Activated T-helper 2 cell treated with anti-CD3 and anti-CD28 coated beads, Interferon-gamma antibody, Interleukin-2, Interleukin-4, amounts not matched to agents 10 μg/mL and 5 μg/mL and 100 μg/mL, durations not matched to agents 14 hours and 24 hours and 36 hours (primary cell): ENCODE measurements at regions of chr1 and their contacts with region 1.

Region 1: GRCh38 chr1:59025898-59026426 is 242.1 kb upstream of the JUN start:
- DNase-seq: no peak
- H3K4me3 Mint-ChIP-seq: peak overlapping the region; percentile 69
- H3K27ac Mint-ChIP-seq: no peak overlapping the region
- H3K4me1 Mint-ChIP-seq: peaks cover 16% of the 10 kb centered on the region
- H3K27me3 Mint-ChIP-seq: no peaks in the 10 kb centered on the region

Region 2: DNA sequence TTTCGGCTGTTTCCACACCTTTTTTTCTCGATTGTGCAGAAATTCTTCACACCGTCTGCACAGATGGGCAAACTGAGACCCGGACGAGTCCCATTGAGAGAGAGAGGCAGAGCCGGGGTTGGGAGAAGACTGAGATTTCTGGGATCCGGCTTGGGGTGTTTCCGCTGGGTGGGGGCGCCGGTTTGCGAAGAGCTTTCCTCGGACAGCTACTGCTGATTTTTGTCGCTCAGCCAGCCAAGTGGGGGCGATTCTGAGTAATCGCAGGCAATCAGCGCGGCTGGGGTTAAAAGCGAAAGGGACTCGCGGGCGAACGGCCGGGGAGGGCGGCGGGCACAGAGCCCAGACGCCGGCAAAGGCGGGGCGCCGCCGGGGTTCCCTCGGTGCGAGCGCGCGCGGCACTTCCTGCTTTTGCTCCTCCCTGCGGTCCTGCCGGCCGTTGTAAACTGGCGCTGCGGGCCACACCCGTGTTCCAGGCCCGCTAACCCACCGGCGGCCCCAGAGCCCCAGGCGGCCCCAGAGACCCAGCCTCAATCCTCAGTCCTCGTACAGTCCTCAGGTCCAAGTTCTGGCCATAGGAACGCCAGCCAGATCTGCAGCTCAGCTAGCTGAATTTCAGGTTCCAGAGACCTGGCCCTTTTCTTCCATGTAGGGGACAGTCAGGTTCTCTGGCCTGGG is 209.8 kb before region 1 on chr1:
- intact Hi-C with region 1: loop called (anchors 2 kb)
- DNase-seq: peak; percentile 85
- H3K4me3 Mint-ChIP-seq: peak overlapping the region; percentile 76
- H3K27ac Mint-ChIP-seq: peak overlapping the region; percentile 73
- H3K4me1 Mint-ChIP-seq: peaks cover 43% of the 10 kb centered on the region
- H3K27me3 Mint-ChIP-seq: peaks cover 7% of the 10 kb centered on the region

Region 3: DNA sequence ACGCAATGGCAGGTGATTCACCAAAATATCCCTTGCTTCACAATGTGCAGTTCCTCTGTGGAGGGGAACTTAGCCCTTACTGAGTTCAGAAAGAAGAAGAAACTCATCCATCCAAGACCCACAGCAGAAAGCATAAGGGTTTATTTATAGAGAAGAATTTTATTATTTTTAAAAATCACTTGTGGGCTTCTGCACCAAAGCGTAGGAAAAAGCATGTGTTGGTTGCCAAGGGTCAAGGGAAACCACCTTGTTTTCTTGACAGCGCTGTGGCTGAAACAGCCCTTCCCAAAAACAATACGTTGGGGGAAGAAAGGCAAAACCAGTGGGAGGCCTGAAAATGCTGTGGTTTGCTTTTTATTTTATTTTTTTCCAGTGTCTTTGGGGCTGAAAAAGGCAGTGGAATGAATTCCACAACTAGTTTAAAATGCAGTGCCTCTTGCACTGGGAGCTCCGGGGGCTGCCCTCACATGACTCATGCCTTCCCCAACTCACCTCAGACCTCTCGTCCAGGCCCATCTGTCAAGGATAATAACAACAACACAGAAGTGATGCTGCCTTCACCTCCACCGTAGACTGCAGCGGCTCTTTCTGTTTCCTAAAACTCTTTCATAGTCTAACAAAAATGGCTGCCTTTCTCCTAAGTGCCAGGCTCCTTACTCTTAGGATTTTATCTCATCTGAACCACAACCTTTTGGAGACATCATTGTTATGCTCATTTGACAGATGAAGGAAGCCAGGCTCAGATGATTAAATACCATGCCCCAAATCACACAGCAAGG is 18.0 kb before region 1 on chr1:
- intact Hi-C with region 1: loop called (anchors 1 kb)
- DNase-seq: no peak
- H3K4me3 Mint-ChIP-seq: no peak overlapping the region
- H3K27ac Mint-ChIP-seq: peak overlapping the region; percentile 85
- H3K4me1 Mint-ChIP-seq: peaks cover 55% of the 10 kb centered on the region
- H3K27me3 Mint-ChIP-seq: no peaks in the 10 kb centered on the region

Region 4: GRCh38 chr1:59143133-59143487 is 117.1 kb after region 1 on chr1:
- intact Hi-C with region 1: loop called (anchors 1 kb)
- DNase-seq: no peak
- H3K4me3 Mint-ChIP-seq: no peak overlapping the region
- H3K27ac Mint-ChIP-seq: peak overlapping the region; percentile 62
- H3K4me1 Mint-ChIP-seq: peaks cover 59% of the 10 kb centered on the region
- H3K27me3 Mint-ChIP-seq: no peaks in the 10 kb centered on the region

Region 5: DNA sequence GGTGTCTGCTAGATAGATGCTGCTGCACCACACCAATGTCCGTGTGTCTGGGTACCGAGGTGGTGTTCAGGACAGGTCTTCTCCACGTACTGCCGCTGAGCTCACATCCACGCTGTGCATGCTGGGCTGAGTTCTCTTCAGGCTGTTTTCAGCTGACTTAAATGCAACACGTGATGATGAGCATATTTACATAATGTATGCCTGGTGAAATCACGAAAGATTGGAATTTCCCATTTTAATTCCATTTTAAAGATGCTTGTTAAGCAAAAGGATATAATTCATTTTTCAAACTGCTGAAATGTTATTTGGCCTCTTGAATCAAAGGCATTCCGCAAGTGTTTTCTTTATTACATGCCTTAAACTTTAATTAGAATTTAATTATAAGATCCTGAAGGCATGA is 378.8 kb after region 1 on chr1:
- intact Hi-C with region 1: no loop called
- DNase-seq: no peak
- H3K4me3 Mint-ChIP-seq: no peak overlapping the region
- H3K27ac Mint-ChIP-seq: no peak overlapping the region
- H3K4me1 Mint-ChIP-seq: peaks cover 7% of the 10 kb centered on the region
- H3K27me3 Mint-ChIP-seq: no peaks in the 10 kb centered on the region

Region 6: GRCh38 chr1:59477286-59477685 is 451.3 kb after region 1 on chr1:
- intact Hi-C with region 1: loop called (anchors 1 kb)
- DNase-seq: peak; percentile 40
- H3K4me3 Mint-ChIP-seq: peak overlapping the region; percentile 54
- H3K27ac Mint-ChIP-seq: peak overlapping the region; percentile 91
- H3K4me1 Mint-ChIP-seq: peaks cover 21% of the 10 kb centered on the region
- H3K27me3 Mint-ChIP-seq: no peaks in the 10 kb centered on the region